HEK293T (cell line): ENCODE measurements at regions of chr2 and their contacts with region 1.

Region 1: GRCh38 chr2:217790681-217791392 is 212.0 kb downstream of the TNS1 start:
- DNase-seq: no peak

Region 2: DNA sequence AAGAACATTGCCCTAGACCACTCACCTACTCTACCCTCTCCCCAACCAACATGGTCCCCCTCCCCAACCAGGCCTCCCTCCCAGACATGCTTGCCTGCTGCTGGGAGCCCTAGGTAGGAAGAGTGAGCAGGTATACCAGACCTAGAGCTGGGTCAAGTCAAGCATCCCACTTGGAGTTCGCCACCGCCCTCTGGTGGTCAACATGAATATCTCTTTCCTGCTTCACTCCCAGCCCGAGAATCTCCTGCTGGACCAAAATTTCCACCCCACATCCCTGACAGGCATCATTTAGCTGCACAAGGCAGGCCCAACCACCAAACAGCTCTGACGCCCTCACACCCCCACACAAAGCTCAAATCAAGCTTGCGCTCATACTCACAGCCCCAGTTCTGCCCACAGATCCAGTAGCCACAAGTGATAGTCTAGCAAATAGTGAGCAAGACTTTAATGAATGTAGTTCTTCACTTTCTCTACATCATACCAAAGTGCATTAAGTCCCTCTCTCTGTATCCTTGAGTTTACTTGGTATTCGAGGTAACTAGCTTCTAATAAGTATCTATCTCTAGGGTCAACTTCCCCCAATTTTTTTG is 96.0 kb after region 1 on chr2:
- CTCF ChIA-PET with region 1: interaction called, 17 read pairs
- POLR2A ChIA-PET with region 1: no interaction called
- DNase-seq: peak; percentile 80